ENCODE measurements at regions of chr4 and their contacts with region 1.

Region 1: GRCh38 chr4:155353923-155354540 is 22.7 kb downstream of the MAP9 start:
- DNase-seq: peak; percentile 88

Region 2: GRCh38 chr4:154559494-154560418 is 794.3 kb before region 1 on chr4:
- intact Hi-C with region 1: loop called in 1 of 2 experiments (anchors 10 kb)
- DNase-seq: no peak